Colonic mucosa (tissue), 4 donors: ENCODE measurements at regions of chr4 and their contacts with region 1.

Region 1: GRCh38 chr4:185395956-185396723 is 416 bp upstream of the LRP2BP start:
- DNase-seq: peak; percentile 97
- H3K4me3 ChIP-seq: peak overlapping the region; percentile 61
- H3K27ac ChIP-seq: peak overlapping the region; percentile 100
- H3K4me1 ChIP-seq: no peaks in the 10 kb centered on the region
- H3K27me3 ChIP-seq: no peaks in the 10 kb centered on the region
- CTCF ChIP-seq: no peak

Region 2: GRCh38 chr4:185005216-185005819 is 390.8 kb before region 1 on chr4:
- intact Hi-C with region 1: no loop called
- DNase-seq: peak; percentile 86
- H3K4me3 ChIP-seq: peak overlapping the region; percentile 10
- H3K27ac ChIP-seq: no peak overlapping the region
- H3K4me1 ChIP-seq: peaks cover 8% of the 10 kb centered on the region
- H3K27me3 ChIP-seq: no peaks in the 10 kb centered on the region
- CTCF ChIP-seq: peak; percentile 89

Region 3: DNA sequence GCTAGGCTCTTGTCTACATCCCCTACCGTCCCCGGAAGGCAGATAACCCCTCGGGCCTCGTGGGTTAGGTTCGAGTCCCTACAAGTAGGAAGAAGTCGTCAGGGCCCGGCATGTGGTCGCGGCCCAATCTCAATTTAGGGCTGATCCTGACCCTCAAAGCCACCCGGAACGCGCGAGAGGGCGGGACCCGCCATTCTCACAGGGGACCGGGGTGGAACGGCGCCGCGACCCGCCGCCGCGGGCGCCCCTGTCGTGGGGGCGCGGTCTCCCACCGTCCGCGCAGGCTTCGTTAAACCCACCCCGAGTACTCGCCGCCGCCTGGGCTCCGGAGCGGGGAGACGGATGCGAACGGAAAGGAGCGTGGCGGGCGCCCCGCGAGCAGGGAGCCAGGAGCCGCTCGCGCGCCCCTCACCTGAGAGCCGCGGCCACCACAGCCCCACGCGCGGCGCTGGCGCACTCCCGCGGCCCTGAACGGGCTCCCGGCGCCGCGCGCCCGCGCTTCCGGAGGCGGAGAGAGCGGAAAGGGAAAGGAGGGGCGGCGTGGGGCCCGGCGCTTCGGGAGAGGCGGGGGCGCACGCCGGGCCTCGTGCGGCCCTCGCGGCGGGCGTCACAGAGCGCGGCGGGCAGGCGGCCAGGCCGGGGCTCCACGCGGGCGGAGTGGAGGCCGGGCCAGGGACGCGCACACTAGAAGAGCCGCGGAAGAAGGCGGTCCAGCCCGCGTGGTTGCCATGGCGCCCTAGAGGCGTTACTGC is 192.5 kb before region 1 on chr4 and contains the start of gene CFAP97:
- intact Hi-C with region 1: loop called (anchors 10 kb)
- DNase-seq: peak; percentile 88
- H3K4me3 ChIP-seq: peak within 1 kb of the TSS; percentile 83
- H3K27ac ChIP-seq: peak within 1 kb of the TSS; percentile 90
- H3K4me1 ChIP-seq: no peaks in the 10 kb centered on the region
- H3K27me3 ChIP-seq: no peaks in the 10 kb centered on the region
- CTCF ChIP-seq: no peak
- total RNA-seq, gene CFAP97: 12.2 to 22.4 TPM

Region 4: GRCh38 chr4:185987961-185988627 is 592.0 kb after region 1 on chr4:
- intact Hi-C with region 1: no loop called
- DNase-seq: no peak
- H3K4me3 ChIP-seq: no peak overlapping the region
- H3K27ac ChIP-seq: no peak overlapping the region
- H3K4me1 ChIP-seq: no peaks in the 10 kb centered on the region
- H3K27me3 ChIP-seq: no peaks in the 10 kb centered on the region
- CTCF ChIP-seq: no peak